Right ventricle myocardium inferior (tissue), 1 donor: ENCODE measurements at regions of chr22 and their contacts with region 1.

Region 1: DNA sequence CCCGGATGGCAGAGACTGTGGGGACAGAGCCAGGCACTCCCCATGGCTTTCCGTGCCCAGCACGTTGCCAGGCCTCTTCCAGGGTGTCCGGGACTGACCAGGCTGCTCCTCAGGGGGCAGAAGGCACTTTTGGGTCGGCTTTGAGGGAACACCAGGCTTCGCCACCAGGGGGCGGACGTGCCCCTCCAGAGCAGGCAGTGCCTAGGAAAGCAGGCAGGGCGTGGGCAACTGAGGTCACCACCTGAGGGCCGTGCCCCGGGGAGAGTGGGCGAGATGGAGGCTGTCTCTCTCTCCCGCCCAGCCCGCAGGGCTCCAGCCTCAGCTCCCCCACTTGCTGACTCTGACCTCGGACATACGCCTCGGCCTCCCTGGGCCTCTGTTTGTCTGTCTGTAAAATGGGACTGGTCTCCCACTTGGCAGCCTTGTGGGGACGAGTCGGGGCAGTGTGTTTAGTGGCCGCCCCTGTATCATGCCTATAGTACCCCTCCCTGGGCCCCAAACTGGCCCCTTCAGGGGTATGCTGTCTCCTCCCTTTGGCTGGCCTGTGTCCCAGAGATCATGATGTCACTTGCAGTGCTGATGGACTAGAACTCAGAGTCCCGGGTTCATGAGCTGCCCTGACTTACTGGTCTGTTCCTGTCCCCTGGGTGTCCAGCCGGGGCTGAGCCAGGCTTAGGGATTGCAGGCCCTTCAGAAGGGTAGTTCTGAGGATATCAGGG is 4.4 kb upstream of the PRR5 start:
- DNase-seq: peak; percentile 90
- ATAC-seq: peak; percentile 58

Region 2: GRCh38 chr22:44735540-44736488 is 38.2 kb after region 1 on chr22:
- intact Hi-C with region 1: loop called (anchors 1 kb)
- DNase-seq: peak; percentile 91
- ATAC-seq: peak; percentile 64

Region 3: DNA sequence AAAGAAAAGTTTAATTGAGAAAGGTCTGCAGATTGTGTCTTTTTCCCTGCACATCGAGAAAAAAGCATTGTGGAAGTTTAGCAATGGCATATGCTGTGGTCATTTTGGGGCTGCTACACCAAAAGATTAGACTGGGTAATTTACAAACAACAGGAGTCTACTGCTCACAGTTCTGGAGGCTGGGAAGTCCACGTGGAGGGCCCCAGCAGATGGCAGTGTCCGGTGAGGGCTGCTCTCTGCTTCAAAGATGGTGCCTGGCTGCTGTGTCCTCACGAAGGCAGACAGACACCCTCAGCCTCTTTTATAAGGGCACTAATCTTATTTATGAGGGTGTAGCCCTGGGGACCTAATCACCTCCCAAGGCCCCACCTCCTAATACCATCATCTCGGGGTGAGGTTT is 291.1 kb after region 1 on chr22:
- intact Hi-C with region 1: no loop called
- DNase-seq: peak; percentile 18
- ATAC-seq: no peak